ENCODE measurements at regions of chr12 and their contacts with region 1.

Region 1: DNA sequence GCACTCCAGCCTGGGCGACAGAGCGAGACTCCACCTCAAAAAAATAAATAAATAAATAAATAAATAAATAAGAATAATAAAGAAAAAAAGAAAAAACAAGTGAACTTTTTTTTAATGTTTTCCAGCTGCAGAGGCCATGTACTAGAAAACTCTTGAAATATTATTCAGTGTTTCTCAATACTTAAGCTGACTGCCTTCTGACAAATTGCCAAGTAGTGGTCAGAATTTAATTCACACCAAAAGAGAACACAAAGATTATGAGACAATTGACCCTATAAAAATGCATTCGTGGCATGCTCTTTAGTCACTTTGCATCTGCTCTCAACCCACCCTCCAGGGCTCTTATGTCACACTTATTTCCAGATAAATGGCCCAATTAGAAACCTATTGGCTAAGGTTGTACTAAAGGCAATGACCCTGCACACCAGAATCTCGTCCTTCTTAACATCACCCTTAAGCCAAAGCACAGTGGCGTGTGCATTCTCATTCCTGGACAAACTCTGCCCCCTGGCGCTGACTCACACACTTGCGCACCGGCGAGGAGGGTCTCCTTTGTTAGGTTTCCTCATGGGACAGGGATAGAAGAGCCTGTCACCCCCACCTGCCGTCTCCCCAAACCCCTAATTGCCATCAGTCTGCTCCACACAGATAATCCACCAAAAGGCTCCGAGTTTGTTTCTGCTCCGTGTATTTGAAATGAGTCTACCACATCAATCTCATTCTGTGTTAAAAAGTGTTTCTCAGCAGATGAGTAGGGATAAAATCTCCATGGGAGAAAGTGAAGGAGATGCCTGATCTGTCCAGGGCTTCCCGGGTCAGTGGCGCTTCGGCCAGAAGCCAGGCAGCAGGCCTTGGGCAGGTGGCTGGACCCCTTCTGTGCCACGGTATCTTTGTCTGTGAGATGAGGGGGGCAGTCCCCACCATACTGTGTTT is 73.1 kb upstream of the CEP83 start:
- DNase-seq: peak; percentile 37 to 41
- ATAC-seq: peak; percentile 64 to 82
- H3K4me3 ChIP-seq: no peak overlapping the region
- H3K27ac ChIP-seq: no peak overlapping the region
- H3K4me1 ChIP-seq: no peaks in the 10 kb centered on the region
- H3K27me3 ChIP-seq: no peaks in the 10 kb centered on the region
- CTCF ChIP-seq: peak; percentile 63 to 73 (median 65)
- POLR2A ChIP-seq: no peak

Region 2: DNA sequence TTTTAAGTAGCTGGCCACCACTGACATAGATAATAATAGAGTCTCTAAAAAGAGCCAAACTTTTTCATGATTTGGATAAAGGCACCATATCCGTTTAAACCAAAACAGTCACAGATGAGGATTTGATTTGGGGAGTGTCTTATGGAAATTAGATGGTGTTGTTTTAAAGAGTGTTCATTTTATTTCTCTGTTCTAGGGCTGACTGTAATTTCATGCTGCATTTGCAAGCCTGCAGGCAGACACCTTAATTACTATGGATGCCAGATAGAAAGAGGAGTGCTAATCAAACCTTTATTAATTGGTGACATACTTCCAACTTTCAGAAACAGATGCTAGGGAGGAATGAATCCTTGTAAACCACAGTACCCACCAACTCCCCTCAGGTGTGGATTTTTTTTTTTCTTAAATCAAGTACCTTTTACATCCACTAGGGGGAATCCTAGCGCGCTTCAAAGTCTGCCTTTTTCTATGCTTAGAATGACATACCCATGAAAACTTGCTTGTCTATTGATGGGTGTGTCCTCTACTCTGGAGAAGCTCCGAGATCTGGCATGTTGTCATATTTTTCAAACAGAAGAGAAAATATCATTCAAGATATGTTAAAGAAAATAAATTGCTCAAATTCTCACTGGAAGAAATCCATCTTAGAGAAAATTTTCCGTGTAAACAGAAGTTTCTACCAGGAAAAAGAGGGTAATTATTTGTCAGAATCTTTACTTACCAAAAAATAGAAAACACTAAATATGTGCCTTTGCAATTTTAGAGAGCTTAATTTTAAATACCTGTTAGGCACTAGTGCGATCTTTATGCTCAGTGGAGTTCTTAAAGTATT is 398.6 kb before region 1 on chr12:
- in situ Hi-C with region 1: loop called (anchors 5 kb)
- intact Hi-C with region 1: loop called (anchors 1 kb)
- DNase-seq: no peak
- ATAC-seq: peak; percentile 82 to 83
- H3K4me3 ChIP-seq: no peak overlapping the region
- H3K27ac ChIP-seq: no peak overlapping the region
- H3K4me1 ChIP-seq: no peaks in the 10 kb centered on the region
- H3K27me3 ChIP-seq: peaks cover 0 to 3% (median 0%) of the 10 kb centered on the region in 3 donors
- CTCF ChIP-seq: peak; percentile 46 to 81 (median 57)
- POLR2A ChIP-seq: no peak

Region 3: DNA sequence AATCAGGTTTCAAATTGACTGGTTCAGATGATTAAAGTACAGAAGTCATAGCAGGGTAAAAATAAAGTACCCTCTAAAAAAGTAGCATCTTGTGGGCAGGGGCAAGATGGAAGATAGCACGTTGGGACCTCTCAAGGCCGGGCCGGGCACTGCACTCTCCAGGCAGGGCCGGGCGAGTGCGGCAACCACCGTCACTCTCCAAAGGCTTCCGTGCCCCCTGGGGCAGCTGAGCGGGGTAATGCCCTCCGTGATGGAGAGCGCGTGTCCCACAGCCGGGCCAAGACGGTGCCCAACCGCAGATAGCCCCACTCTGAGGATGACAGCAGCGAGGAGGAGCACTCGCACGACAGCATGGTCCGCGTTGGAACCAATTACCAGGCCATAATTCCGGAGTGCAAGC is 392.9 kb before region 1 on chr12:
- in situ Hi-C with region 1: loop called in 3 of 4 experiments (anchors 5 kb)
- intact Hi-C with region 1: loop called (anchors 5 kb)
- DNase-seq: no peak
- ATAC-seq: no peak
- H3K4me3 ChIP-seq: no peak overlapping the region
- H3K27ac ChIP-seq: no peak overlapping the region
- H3K4me1 ChIP-seq: no peaks in the 10 kb centered on the region
- H3K27me3 ChIP-seq: no peaks in the 10 kb centered on the region
- CTCF ChIP-seq: no peak
- POLR2A ChIP-seq: no peak

Region 4: GRCh38 chr12:94149119-94149780 is 383.5 kb before region 1 on chr12:
- in situ Hi-C with region 1: no loop called
- intact Hi-C with region 1: loop called (anchors 5 kb)
- DNase-seq: no peak
- ATAC-seq: peak in 1 of 2 donors; percentile 38
- H3K4me3 ChIP-seq: peak overlapping the region; percentile 43 to 60 (median 60)
- H3K27ac ChIP-seq: no peak overlapping the region
- H3K4me1 ChIP-seq: peaks cover 4 to 5% of the 10 kb centered on the region in 2 donors
- H3K27me3 ChIP-seq: peaks cover 7 to 23% (median 18%) of the 10 kb centered on the region in 3 donors
- CTCF ChIP-seq: no peak
- POLR2A ChIP-seq: no peak

Region 5: DNA sequence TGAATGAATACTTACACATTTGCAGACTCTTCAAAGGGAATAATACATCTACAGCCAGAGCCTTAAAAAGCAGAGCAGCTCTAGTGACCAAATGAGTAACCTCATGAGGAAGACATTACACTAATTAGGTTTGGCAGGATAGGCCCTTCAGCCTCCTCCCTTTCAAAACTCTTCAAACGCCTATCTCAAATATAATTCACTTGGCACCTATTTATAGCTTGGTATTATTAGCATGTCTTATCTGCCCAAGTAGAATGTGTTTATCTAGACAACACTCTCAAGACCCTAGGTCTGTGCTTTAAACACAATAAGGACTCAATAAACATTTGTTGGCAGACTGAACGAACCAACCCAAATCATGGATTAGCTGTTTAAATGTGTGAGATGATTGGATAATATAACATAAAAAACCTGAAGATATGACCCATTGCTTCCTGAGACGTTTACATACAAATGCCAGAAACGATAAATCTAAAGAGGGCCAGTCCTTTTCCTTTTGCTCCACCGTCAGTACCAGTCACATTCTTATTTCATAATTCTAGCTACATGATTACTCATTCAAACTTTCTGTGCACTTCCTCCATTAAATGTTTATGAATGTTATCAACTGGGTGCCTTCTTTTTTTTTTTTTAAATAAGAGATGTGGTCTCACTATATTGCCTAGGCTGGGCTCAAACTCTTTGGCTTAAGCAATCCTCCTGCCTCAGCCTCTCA is 196.4 kb before region 1 on chr12:
- in situ Hi-C with region 1: no loop called
- intact Hi-C with region 1: loop called (anchors 10 kb)
- DNase-seq: no peak
- ATAC-seq: no peak
- H3K4me3 ChIP-seq: no peak overlapping the region
- H3K27ac ChIP-seq: no peak overlapping the region
- H3K4me1 ChIP-seq: no peaks in the 10 kb centered on the region
- H3K27me3 ChIP-seq: no peaks in the 10 kb centered on the region
- CTCF ChIP-seq: no peak
- POLR2A ChIP-seq: no peak

Region 6: GRCh38 chr12:94628819-94629472 is 96.2 kb after region 1 on chr12:
- in situ Hi-C with region 1: no loop called
- intact Hi-C with region 1: no loop called
- DNase-seq: no peak
- ATAC-seq: no peak
- H3K4me3 ChIP-seq: no peak overlapping the region
- H3K27ac ChIP-seq: peak overlapping the region in 2 of 4 donors; percentile 23 to 29
- H3K4me1 ChIP-seq: peaks cover 39 to 55% of the 10 kb centered on the region in 2 donors
- H3K27me3 ChIP-seq: no peaks in the 10 kb centered on the region
- CTCF ChIP-seq: no peak
- POLR2A ChIP-seq: no peak